Activated CD4-positive, alpha-beta T cell treated with anti-CD3 and anti-CD28 coated beads for 36 hours (primary cell): ENCODE measurements at regions of chr2 and their contacts with region 1.

Region 1: DNA sequence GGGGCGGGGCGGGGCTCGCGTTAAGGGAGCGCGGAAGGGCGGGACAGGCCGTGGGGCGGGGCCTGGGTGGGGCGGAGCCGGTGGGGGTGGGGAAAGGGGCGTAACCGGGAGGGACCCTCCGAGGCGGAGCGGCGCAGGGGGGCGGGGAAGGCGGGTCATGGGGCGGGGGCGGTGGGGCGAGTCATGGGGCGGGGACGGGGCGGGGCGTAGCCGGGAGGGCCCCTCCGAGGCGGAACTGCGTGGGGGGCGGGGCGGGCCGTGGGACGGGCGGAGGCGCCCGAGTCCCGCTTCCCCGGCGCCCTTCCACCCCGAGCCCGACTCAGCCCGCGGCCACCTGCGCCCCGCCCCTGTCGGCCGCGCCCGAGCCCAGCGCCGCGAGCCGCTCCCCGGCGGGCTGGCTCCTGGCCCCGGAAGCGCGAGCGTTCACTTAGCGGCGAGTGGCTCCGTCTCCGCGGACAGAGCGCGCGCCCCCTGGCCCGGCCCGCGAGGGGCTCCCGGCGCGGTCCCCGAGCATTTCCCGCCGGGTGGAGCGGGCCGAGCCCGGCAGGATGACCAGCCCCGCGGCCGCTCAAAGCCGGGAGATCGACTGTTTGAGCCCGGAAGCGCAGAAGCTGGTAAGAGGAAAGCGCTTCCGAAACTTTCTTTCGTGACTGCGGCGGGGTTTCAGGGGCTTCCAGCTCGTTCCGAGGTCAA is 64.7 kb downstream of the LRRFIP1 start:
- DNase-seq: peak; percentile 98
- ATAC-seq: peak; percentile 59
- H3K4me3 Mint-ChIP-seq: peak overlapping the region; percentile 97
- H3K27ac Mint-ChIP-seq: peak overlapping the region; percentile 97
- H3K4me1 Mint-ChIP-seq: peaks cover 64% of the 10 kb centered on the region
- H3K27me3 Mint-ChIP-seq: no peaks in the 10 kb centered on the region

Region 2: GRCh38 chr2:236550701-236551465 is 1141.2 kb before region 1 on chr2:
- CTCF ChIA-PET with region 1: no interaction called
- POLR2A ChIA-PET with region 1: no interaction called
- intact Hi-C with region 1: loop called in 1 of 2 experiments (anchors 10 kb)
- DNase-seq: peak; percentile 69
- ATAC-seq: peak; percentile 17
- H3K4me3 Mint-ChIP-seq: no peak overlapping the region
- H3K27ac Mint-ChIP-seq: no peak overlapping the region
- H3K4me1 Mint-ChIP-seq: peaks cover 97% of the 10 kb centered on the region
- H3K27me3 Mint-ChIP-seq: no peaks in the 10 kb centered on the region

Region 3: GRCh38 chr2:237581751-237582746 is 110.0 kb before region 1 on chr2:
- CTCF ChIA-PET with region 1: interaction called, 5 read pairs
- POLR2A ChIA-PET with region 1: interaction called, 3 read pairs
- intact Hi-C with region 1: loop called in 1 of 2 experiments (anchors 2 kb)
- DNase-seq: peak; percentile 82
- ATAC-seq: peak; percentile 99
- H3K4me3 Mint-ChIP-seq: no peak overlapping the region
- H3K27ac Mint-ChIP-seq: peak overlapping the region; percentile 58
- H3K4me1 Mint-ChIP-seq: peaks cover 3% of the 10 kb centered on the region
- H3K27me3 Mint-ChIP-seq: no peaks in the 10 kb centered on the region

Region 4: DNA sequence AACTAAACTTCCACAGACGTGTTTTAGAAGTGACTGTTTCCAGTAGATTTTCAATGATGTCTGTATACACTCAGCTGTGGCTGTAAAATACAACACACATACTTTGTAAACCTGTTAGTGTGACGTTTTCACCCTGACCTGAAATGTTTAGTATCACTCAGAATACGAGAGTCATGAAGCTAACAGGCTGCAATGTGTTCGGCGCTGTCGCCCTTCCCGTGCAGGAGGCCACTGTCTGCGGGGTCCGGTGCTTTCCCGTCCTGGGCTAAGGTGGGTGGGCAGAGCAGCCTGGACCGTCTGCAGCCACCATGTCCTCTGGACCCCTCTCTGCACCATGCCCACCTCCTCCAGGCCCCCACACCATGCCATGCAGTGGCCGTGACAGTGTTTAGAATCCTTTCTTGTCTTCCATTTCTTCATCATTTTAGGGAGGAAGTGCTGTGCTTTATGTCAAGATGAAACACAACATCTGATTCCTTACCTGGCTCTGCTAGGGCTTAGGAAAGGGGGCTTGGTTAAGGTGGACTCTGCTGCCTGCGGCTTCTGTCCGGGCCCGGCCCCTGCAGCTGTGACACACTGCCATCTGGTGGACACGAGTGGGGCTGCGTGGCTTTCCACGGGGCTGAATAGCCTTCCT is 52.7 kb after region 1 on chr2:
- CTCF ChIA-PET with region 1: interaction called, 16 read pairs
- POLR2A ChIA-PET with region 1: interaction called, 3 read pairs
- intact Hi-C with region 1: loop called in 1 of 2 experiments (anchors 1 kb)
- DNase-seq: peak; percentile 84
- ATAC-seq: peak; percentile 85
- H3K4me3 Mint-ChIP-seq: no peak overlapping the region
- H3K27ac Mint-ChIP-seq: peak overlapping the region; percentile 63
- H3K4me1 Mint-ChIP-seq: peaks cover 35% of the 10 kb centered on the region
- H3K27me3 Mint-ChIP-seq: no peaks in the 10 kb centered on the region

Region 5: DNA sequence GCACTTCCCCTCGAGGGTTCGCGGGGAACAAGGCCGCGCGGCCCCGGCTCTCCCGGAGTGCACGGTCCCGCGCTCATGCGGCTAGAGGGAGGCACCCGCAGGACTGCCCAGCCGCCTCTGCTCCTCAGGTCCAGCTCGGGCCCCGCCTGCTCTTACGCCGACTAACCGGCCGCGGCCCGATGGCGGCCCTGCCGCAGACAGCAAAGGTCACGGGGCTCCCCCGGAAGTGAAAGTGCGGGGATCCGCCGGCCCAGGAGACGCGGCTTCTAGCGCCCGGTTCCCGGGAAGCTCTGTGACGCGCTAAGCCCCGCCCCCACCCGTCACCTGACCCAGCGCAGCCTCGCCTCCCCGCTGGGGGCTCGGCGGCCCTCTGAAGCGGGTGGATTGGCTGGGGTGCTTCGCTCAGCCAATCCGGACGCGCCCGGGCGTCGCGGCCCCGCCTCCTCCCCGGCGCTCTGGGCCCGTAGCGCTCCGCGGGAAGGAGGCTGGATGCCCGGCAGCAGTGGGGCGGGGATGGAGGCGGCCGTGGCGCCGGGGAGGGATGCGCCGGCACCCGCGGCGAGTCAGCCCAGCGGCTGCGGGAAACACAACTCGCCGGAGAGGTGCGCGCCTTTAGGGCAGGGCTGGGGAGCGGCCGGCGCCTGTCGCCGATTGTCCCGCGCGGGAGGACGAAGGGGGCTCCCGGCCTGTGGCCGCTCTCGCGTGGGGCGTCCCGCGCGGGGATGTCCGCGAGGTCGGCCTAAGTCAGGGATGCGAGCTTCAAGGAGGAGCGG is 368.7 kb after region 1 on chr2 and contains the start of gene SCLY:
- CTCF ChIA-PET with region 1: no interaction called
- POLR2A ChIA-PET with region 1: no interaction called
- intact Hi-C with region 1: loop called (anchors 1 to 10 kb)
- DNase-seq: peak; percentile 99
- ATAC-seq: peak; percentile 97
- H3K4me3 Mint-ChIP-seq: peak within 1 kb of the TSS; percentile 80
- H3K27ac Mint-ChIP-seq: peak within 1 kb of the TSS; percentile 96
- H3K4me1 Mint-ChIP-seq: peaks cover 49% of the 10 kb centered on the region
- H3K27me3 Mint-ChIP-seq: peaks cover 10% of the 10 kb centered on the region
- total RNA-seq, gene SCLY: 59.2 to 60.5 TPM

Region 6: GRCh38 chr2:238438856-238439849 is 747.1 kb after region 1 on chr2:
- CTCF ChIA-PET with region 1: no interaction called
- POLR2A ChIA-PET with region 1: no interaction called
- intact Hi-C with region 1: loop called in 1 of 2 experiments (anchors 1 kb)
- DNase-seq: peak; percentile 84
- ATAC-seq: peak; percentile 93
- H3K4me3 Mint-ChIP-seq: peak overlapping the region; percentile 55
- H3K27ac Mint-ChIP-seq: peak overlapping the region; percentile 80
- H3K4me1 Mint-ChIP-seq: peaks cover 47% of the 10 kb centered on the region
- H3K27me3 Mint-ChIP-seq: no peaks in the 10 kb centered on the region

Region 7: DNA sequence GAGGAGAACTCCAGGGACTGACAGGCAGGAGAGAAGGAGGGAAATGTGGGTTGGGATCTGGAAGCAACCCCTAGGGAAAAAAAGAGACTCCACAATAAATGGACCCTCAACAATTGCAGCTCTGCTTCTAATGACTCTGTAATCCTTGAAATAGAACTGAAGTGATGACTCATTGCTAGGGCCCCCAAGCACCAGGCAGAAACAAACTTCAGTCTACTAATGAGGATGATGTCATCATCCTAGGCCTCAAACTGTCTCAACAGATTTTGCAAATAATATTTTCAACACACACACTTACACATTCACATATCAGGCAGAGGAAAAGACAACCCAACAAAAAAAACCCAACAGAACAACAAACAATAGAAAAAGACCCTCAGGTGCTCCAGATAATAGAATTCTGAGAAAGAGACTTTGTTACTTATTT is 1565.5 kb after region 1 on chr2:
- CTCF ChIA-PET with region 1: no interaction called
- POLR2A ChIA-PET with region 1: no interaction called
- intact Hi-C with region 1: no loop called
- DNase-seq: no peak
- ATAC-seq: peak; percentile 46
- H3K4me3 Mint-ChIP-seq: peak overlapping the region; percentile 32
- H3K27ac Mint-ChIP-seq: peak overlapping the region; percentile 88
- H3K4me1 Mint-ChIP-seq: peaks cover 91% of the 10 kb centered on the region
- H3K27me3 Mint-ChIP-seq: no peaks in the 10 kb centered on the region